Pancreas (tissue), 10 donors: ENCODE measurements at regions of chr10 and their contacts with region 1.

Region 1: GRCh38 chr10:97553575-97554031 is 19.0 kb upstream of the ANKRD2 start:
- DNase-seq: peak in 5 of 6 donors; percentile 38 to 78 (median 67)
- ATAC-seq: peak; percentile 96 to 98 (median 97)
- H3K4me3 ChIP-seq: no peak overlapping the region
- H3K27ac ChIP-seq: no peak overlapping the region
- H3K4me1 ChIP-seq: no peaks in the 10 kb centered on the region
- H3K27me3 ChIP-seq: no peaks in the 10 kb centered on the region
- CTCF ChIP-seq: peak; percentile 29 to 68 (median 48)

Region 2: GRCh38 chr10:97463363-97464132 is 90.1 kb before region 1 on chr10:
- intact Hi-C with region 1: loop called in 2 of 3 experiments (anchors 5 to 10 kb)
- DNase-seq: peak in 4 of 6 donors; percentile 45 to 64 (median 48)
- ATAC-seq: peak; percentile 83 to 97 (median 92)
- H3K4me3 ChIP-seq: no peak overlapping the region
- H3K27ac ChIP-seq: peak overlapping the region in 1 of 4 donors; percentile 12
- H3K4me1 ChIP-seq: peaks cover 0 to 2% (median 0%) of the 10 kb centered on the region in 3 donors
- H3K27me3 ChIP-seq: no peaks in the 10 kb centered on the region
- CTCF ChIP-seq: peak; percentile 50 to 80 (median 78)